B cell (primary cell): ENCODE measurements at regions of chr11 and their contacts with region 1.

Region 1: GRCh38 chr11:10653926-10654810 is 39.4 kb downstream of the IRAG1 start:
- DNase-seq: peak; percentile 79
- ATAC-seq: peak; percentile 69
- H3K4me3 ChIP-seq: peak overlapping the region in 1 of 5 experiments; percentile 1
- H3K4me3 Mint-ChIP-seq: no peak overlapping the region
- H3K27ac ChIP-seq: no peak overlapping the region
- H3K27ac Mint-ChIP-seq: peak overlapping the region; percentile 2
- H3K4me1 ChIP-seq: peaks cover 60 to 66% of the 10 kb centered on the region in 2 donors
- H3K4me1 Mint-ChIP-seq: peaks cover 82% of the 10 kb centered on the region
- H3K27me3 ChIP-seq: no peaks in the 10 kb centered on the region
- H3K27me3 Mint-ChIP-seq: no peaks in the 10 kb centered on the region
- CTCF ChIP-seq: peak; percentile 63

Region 2: DNA sequence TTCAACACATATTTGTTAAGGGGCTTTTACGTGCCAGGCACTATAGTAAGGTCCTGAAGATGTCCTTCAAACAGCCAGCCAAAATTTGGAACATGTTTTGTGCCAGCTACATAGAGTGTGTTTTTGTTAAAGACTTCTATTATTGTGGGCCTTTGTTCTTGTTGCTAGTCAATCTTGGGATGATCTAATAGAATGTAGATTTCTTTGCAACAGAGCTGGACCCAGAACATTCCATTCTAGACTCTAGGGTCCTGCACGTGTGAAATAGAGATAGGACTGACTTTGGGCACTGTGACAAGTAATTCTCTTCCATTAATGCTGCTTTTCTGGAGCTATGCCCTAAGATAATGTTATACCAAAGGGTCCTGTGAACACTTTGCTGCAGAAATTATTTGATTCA is 1286.6 kb before region 1 on chr11:
- CTCF ChIA-PET with region 1: no interaction called
- POLR2A ChIA-PET with region 1: no interaction called
- intact Hi-C with region 1: no loop called
- DNase-seq: no peak
- ATAC-seq: no peak
- H3K4me3 ChIP-seq: no peak overlapping the region
- H3K4me3 Mint-ChIP-seq: no peak overlapping the region
- H3K27ac ChIP-seq: no peak overlapping the region
- H3K27ac Mint-ChIP-seq: no peak overlapping the region
- H3K4me1 ChIP-seq: peaks cover 0 to 9% of the 10 kb centered on the region in 2 donors
- H3K4me1 Mint-ChIP-seq: peaks cover 9% of the 10 kb centered on the region
- H3K27me3 ChIP-seq: peaks cover 0 to 2% (median 0%) of the 10 kb centered on the region in 4 experiments
- H3K27me3 Mint-ChIP-seq: peaks cover 9% of the 10 kb centered on the region
- CTCF ChIP-seq: no peak

Region 3: GRCh38 chr11:10514210-10514609 is 140.0 kb before region 1 on chr11:
- CTCF ChIA-PET with region 1: interaction called, 17 read pairs
- POLR2A ChIA-PET with region 1: no interaction called
- intact Hi-C with region 1: loop called (anchors 1 kb)
- DNase-seq: peak; percentile 42
- ATAC-seq: no peak
- H3K4me3 ChIP-seq: no peak overlapping the region
- H3K4me3 Mint-ChIP-seq: no peak overlapping the region
- H3K27ac ChIP-seq: peak overlapping the region in 1 of 2 donors; percentile 7
- H3K27ac Mint-ChIP-seq: peak overlapping the region; percentile 43
- H3K4me1 ChIP-seq: no peaks in the 10 kb centered on the region
- H3K4me1 Mint-ChIP-seq: peaks cover 16% of the 10 kb centered on the region
- H3K27me3 ChIP-seq: no peaks in the 10 kb centered on the region
- H3K27me3 Mint-ChIP-seq: no peaks in the 10 kb centered on the region
- CTCF ChIP-seq: peak; percentile 62

Region 4: DNA sequence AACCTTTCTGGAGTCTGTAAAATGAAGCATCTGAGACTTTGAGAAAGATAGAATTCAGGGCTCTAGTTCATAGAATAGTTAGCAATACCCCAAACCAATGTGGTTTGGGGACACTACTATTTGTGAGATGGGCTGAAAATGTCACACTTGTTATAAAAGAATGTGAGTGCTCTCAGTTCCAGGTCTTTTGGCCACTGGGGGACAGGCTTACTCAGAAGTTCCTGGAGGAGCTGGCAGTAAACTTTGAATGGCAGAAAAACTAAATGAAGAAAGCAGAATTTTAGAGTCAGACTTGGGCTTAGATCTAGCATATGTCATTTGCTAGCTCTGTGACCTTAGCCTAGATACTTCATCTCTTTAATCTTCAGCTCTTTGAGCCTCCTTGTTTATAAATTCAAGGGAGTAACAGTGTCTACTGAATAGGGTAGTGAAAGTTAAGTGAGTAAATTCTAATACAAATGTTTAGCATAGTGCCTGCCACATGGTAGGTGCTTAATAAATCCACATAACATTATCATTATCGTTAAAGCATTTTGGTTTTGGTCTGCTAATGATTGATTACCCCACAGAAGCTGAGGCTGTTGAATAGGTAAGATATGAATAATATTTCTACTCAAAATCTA is 89.4 kb before region 1 on chr11:
- CTCF ChIA-PET with region 1: interaction called, 57 read pairs
- POLR2A ChIA-PET with region 1: interaction called, 3 read pairs
- intact Hi-C with region 1: loop called (anchors 1 kb)
- DNase-seq: peak; percentile 55
- ATAC-seq: peak; percentile 43
- H3K4me3 ChIP-seq: no peak overlapping the region
- H3K4me3 Mint-ChIP-seq: no peak overlapping the region
- H3K27ac ChIP-seq: peak overlapping the region in 1 of 2 donors; percentile 14
- H3K27ac Mint-ChIP-seq: peak overlapping the region; percentile 71
- H3K4me1 ChIP-seq: peaks cover 17 to 35% of the 10 kb centered on the region in 2 donors
- H3K4me1 Mint-ChIP-seq: peaks cover 53% of the 10 kb centered on the region
- H3K27me3 ChIP-seq: no peaks in the 10 kb centered on the region
- H3K27me3 Mint-ChIP-seq: no peaks in the 10 kb centered on the region
- CTCF ChIP-seq: peak; percentile 22

Region 5: DNA sequence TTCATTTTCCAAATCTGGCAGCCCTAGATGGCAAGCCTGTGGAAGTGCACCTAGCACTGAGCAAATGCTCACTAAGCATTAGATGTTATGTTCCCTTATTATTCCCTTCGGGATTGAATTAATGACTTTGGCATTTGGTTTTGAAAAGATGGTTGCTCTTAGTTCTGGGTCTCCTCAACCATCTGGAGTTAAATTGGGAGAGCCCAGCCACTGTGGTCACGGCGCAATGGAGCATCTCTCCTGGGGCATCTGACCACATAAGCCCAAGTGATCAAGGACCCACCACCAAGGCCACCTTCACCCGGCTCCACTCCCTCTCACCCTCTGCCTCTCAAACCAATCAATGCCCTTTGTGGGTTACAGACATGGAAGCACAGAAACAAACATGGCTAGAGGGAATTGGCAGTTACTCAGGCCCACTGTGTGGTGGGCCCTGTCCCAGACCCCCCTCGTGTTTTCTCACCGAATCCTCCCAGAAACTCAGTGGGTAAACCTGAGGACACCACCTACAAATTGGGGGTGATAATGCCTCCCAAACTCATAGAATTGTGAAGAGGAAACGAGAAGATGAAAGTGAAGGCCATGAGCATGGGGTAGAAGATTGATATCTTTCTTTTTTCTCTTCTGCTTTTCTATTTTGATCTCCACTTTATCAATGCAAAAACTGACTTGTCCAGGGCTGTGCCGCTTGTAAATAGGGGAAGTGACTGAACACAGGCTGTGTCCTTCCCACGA is 12.8 kb before region 1 on chr11:
- CTCF ChIA-PET with region 1: interaction called, 19 read pairs
- POLR2A ChIA-PET with region 1: interaction called, 4 read pairs
- intact Hi-C with region 1: no loop called
- DNase-seq: peak; percentile 77
- ATAC-seq: peak; percentile 87
- H3K4me3 ChIP-seq: peak overlapping the region in 1 of 5 experiments; percentile 35
- H3K4me3 Mint-ChIP-seq: peak overlapping the region; percentile 74
- H3K27ac ChIP-seq: peak overlapping the region; percentile 87 to 88
- H3K27ac Mint-ChIP-seq: peak overlapping the region; percentile 94
- H3K4me1 ChIP-seq: peaks cover 55 to 79% of the 10 kb centered on the region in 2 donors
- H3K4me1 Mint-ChIP-seq: peaks cover 81% of the 10 kb centered on the region
- H3K27me3 ChIP-seq: no peaks in the 10 kb centered on the region
- H3K27me3 Mint-ChIP-seq: no peaks in the 10 kb centered on the region
- CTCF ChIP-seq: no peak